ENCODE measurements at regions of chr17 and their contacts with region 1.

Region 1: GRCh38 chr17:58277107-58277801 is 3.5 kb downstream of the MPO start:
- DNase-seq: no peak
- H3K4me3 ChIP-seq: no peak overlapping the region
- H3K27ac ChIP-seq: no peak overlapping the region
- H3K4me1 ChIP-seq: no peaks in the 10 kb centered on the region
- H3K27me3 ChIP-seq: peaks cover 40% of the 10 kb centered on the region
- CTCF ChIP-seq: peak; percentile 26 to 57 (median 45)

Region 2: GRCh38 chr17:58249270-58250133 is 27.8 kb before region 1 on chr17:
- dilution Hi-C with region 1: no loop called
- DNase-seq: no peak
- H3K4me3 ChIP-seq: peak overlapping the region; percentile 30 to 66 (median 57)
- H3K27ac ChIP-seq: no peak overlapping the region
- H3K4me1 ChIP-seq: peaks cover 5% of the 10 kb centered on the region
- H3K27me3 ChIP-seq: peaks cover 42% of the 10 kb centered on the region
- CTCF ChIP-seq: peak; percentile 80 to 99 (median 87)

Region 3: DNA sequence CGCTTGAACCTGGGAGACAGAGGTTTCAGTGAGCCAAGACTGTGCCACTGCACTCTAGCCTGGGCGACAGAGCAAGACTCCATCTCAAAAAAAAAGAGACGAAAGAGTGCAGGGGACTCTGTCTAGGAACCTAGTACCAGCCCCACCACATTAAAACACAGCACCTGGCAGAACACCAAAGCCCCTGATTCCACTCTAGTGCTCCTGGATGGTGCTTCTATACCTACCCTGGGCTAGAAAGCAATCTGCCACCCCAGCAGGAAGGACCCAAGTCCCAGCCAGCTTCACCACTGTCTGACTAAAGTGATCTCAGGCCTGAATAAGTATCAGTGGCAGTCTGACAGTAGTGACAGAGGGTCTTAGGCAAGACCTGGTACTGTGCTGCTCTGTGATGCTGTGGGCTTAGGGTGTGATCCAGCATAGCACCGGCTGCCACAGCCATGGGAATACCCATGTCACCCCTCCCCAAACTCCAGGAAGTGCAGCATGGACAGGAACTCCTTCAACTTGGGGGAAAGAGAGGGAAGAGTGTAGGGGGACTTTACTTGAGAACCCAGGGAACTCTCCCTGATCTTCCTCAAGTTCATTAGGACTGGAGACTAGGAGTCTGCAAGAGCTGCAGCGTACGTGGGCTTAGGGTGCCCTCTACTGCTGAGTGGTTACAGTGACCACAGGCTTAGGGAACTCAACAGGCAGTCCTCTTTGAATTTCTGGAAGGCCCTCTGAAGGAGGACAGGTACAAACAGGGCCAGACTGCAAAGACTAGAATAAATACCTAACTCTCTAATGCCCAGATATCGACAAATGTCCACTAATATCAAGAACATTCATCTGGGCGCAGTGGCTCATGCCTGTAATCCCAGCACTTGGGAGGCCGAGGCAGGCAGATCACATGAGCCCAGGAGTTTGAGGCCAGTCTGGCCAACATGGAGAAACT is 170.1 kb after region 1 on chr17:
- dilution Hi-C with region 1: loop called (anchors 25 kb)
- DNase-seq: peak; percentile 69
- H3K4me3 ChIP-seq: no peak overlapping the region
- H3K27ac ChIP-seq: no peak overlapping the region
- H3K4me1 ChIP-seq: no peaks in the 10 kb centered on the region
- H3K27me3 ChIP-seq: no peaks in the 10 kb centered on the region
- CTCF ChIP-seq: peak; percentile 88 to 95 (median 90)